A549 (cell line): ENCODE measurements at regions of chr17 and their contacts with region 1.

Region 1: GRCh38 chr17:72937707-72938106 is 154.8 kb downstream of the SLC39A11 start:
- DNase-seq: no peak
- ATAC-seq: no peak; a peak in 1 of 6 replicates
- H3K4me3 ChIP-seq: no peak overlapping the region
- H3K27ac ChIP-seq: no peak overlapping the region
- H3K4me1 ChIP-seq: no peaks in the 10 kb centered on the region
- CTCF ChIP-seq: no peak
- EP300 ChIP-seq: no peak
- POLR2A ChIP-seq: no peak
- RAD21 ChIP-seq: no peak

Region 2: DNA sequence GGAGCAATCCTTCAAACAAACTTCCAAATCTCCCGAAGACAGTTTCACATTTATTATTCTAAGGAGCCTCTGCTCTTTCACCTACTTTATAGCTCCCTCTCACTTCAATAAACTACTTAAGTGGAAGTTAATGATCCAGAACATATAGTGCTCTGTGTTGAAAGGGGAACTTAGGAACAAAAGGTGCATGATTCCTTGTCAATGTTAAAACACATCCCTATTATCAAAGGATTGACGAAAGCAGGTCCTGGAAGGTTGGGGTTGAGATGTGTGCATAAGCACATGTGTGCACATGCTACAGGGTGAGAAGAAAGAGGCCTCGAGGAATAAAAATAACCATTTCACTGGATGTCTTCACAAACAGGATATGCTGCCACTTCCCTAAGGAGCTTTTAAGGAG is 15.5 kb before region 1 on chr17:
- CTCF ChIA-PET with region 1: interaction called, 14 read pairs
- POLR2A ChIA-PET with region 1: no interaction called
- DNase-seq: no peak
- ATAC-seq: no peak
- H3K4me3 ChIP-seq: no peak overlapping the region
- H3K27ac ChIP-seq: no peak overlapping the region
- H3K4me1 ChIP-seq: no peaks in the 10 kb centered on the region
- CTCF ChIP-seq: no peak
- EP300 ChIP-seq: no peak
- POLR2A ChIP-seq: no peak
- RAD21 ChIP-seq: no peak

Region 3: GRCh38 chr17:73072219-73072962 is 134.7 kb after region 1 on chr17:
- CTCF ChIA-PET with region 1: no interaction called
- POLR2A ChIA-PET with region 1: no interaction called
- DNase-seq: no peak
- ATAC-seq: no peak
- H3K4me3 ChIP-seq: no peak overlapping the region
- H3K27ac ChIP-seq: no peak overlapping the region
- H3K4me1 ChIP-seq: no peaks in the 10 kb centered on the region
- CTCF ChIP-seq: no peak
- EP300 ChIP-seq: no peak
- POLR2A ChIP-seq: no peak
- RAD21 ChIP-seq: no peak